Activated CD4-positive, alpha-beta T cell treated with anti-CD3 and anti-CD28 coated beads for 36 hours (primary cell): ENCODE measurements at regions of chr16 and their contacts with region 1.

Region 1: DNA sequence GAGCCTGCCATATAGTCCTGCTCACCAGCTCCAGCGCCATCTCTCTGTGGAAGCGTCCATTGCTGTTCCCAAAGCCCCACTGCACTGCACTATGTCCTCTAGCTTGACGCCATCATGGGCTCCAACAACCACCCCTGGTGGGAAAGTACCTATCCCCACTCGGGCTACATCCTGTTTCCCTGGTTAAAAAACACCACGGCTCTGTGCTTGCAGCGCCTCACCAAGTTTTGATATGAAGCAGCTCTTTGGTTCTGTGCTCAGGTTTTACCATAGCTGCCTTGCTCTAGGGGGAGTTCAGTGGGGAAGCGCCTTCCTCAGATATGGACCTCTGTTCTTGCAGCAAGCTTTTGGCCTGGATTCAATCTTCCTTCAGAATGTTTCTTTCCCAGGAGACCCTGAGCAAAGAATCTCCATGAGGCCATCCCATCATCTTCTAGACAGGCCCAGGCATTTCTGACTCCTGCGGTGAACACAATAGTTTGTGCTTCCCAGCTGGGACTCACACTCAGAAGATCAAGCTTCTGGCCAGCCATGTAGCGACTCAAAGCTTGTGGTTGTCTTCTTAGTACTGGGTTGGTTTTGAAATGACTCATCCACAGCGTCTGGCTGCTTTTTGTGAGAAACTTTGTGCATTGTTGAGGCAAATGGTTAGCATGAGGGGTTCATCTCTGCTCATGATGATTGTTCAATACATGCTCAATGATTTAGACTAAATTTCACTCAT is 39.5 kb downstream of the DYNLRB2 start:
- DNase-seq: peak; percentile 86
- ATAC-seq: peak; percentile 91
- H3K4me3 Mint-ChIP-seq: peak overlapping the region; percentile 60
- H3K27ac Mint-ChIP-seq: peak overlapping the region; percentile 99
- H3K4me1 Mint-ChIP-seq: peaks cover 50% of the 10 kb centered on the region
- H3K27me3 Mint-ChIP-seq: peaks cover 2% of the 10 kb centered on the region

Region 2: DNA sequence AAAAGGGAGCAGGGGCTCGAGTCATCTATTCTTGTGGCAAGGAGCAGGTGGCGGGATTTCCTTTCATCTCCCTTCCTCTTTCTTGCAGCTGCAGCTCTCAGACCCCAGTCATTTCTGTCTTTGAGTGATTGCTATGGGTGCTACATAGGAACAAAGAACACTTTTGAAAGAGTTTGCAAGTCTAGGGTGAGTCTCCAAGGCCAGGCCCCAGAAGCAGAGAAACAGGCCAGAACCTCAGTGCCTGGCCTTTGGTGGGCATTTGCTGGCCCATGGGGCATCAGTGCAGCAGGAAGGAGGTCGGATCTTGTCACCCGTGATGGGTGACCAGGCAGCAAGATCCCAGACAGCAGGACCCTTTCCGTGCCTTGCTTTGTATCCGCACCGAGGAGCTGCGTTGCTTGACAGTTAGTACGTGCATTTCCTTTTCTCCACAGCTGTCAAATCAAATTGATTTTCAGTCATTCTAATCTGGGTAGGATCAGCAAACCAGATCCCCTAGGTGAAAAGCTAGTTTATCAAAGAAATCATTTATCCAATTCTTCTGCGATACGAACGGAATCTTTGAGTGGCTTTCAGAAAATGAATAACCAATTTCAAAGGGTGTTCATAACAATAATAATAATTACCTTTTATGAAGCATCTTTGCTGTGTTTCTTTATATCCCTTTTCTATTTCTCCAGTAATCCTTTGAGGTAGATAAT is 735.1 kb before region 1 on chr16:
- CTCF ChIA-PET with region 1: no interaction called
- POLR2A ChIA-PET with region 1: no interaction called
- intact Hi-C with region 1: loop called in 1 of 2 experiments (anchors 10 kb)
- DNase-seq: peak; percentile 47
- ATAC-seq: peak; percentile 45
- H3K4me3 Mint-ChIP-seq: no peak overlapping the region
- H3K27ac Mint-ChIP-seq: peak overlapping the region; percentile 74
- H3K4me1 Mint-ChIP-seq: peaks cover 32% of the 10 kb centered on the region
- H3K27me3 Mint-ChIP-seq: peaks cover 10% of the 10 kb centered on the region

Region 3: GRCh38 chr16:79970551-79971236 is 609.6 kb before region 1 on chr16:
- CTCF ChIA-PET with region 1: no interaction called
- POLR2A ChIA-PET with region 1: no interaction called
- intact Hi-C with region 1: no loop called
- DNase-seq: no peak
- ATAC-seq: no peak
- H3K4me3 Mint-ChIP-seq: no peak overlapping the region
- H3K27ac Mint-ChIP-seq: no peak overlapping the region
- H3K4me1 Mint-ChIP-seq: no peaks in the 10 kb centered on the region
- H3K27me3 Mint-ChIP-seq: peaks cover 8% of the 10 kb centered on the region

Region 4: DNA sequence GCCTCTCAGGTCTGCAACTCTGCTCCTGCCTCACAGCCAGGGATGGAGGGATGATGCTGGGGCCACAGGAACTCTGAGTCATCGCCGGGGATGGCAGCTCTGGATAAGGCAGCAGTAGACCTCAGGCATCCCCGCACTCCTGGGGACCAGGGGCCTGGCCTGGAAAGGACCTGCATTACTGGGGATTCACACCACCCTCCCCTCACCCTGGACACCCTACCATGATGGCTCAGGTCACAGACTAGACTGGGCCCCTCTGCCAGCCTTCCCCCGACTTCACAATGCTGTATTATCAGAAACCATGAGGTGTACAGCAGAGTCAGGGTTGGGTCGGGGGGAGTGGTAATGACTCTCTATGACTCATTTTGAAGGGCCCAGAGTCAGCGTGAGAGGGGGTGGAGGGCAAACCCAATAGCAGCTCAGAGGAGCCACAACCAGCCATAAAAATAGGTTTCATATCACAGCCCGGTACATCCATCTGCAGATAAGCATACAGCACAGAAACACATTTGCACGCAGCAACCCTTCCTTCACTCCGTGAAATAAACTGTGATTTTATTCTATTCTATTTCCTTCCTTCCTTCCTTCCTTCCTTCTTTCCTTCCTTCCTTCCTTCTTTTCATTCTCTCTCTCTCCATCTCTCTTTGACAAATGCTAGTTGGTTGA is 10.7 kb before region 1 on chr16:
- CTCF ChIA-PET with region 1: interaction called, 3 read pairs
- POLR2A ChIA-PET with region 1: interaction called, 3 read pairs
- intact Hi-C with region 1: loop called (anchors 1 kb)
- DNase-seq: peak; percentile 90
- ATAC-seq: peak; percentile 98
- H3K4me3 Mint-ChIP-seq: peak overlapping the region; percentile 5
- H3K27ac Mint-ChIP-seq: peak overlapping the region; percentile 81
- H3K4me1 Mint-ChIP-seq: peaks cover 38% of the 10 kb centered on the region
- H3K27me3 Mint-ChIP-seq: peaks cover 4% of the 10 kb centered on the region

Region 5: DNA sequence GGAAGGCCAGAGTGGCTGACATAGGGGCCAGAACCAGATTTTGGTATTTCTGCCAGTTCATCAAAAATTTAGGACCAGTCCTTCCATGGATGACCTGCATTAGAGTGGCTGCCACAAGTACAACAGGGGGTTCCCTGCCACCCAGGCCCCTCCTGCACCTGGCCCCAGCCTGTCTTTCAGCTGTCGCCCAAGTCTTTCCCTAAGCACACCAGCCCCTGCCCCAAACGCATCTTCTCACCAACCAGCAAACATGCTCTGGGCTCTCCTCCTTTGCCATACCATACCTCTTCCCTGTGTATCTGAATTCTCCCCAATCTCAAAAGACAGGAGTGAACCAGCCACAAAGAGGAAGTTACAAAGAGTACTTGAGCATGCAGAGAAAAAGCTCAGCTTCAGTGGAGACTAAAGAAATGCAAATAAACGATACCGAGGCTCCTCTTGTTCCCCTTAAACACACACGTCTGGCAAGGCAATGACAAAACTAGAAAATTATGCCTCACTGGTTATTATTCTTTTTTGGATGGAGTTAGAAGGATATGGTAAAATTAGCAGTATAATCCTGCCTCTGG is 91.1 kb after region 1 on chr16:
- CTCF ChIA-PET with region 1: no interaction called
- POLR2A ChIA-PET with region 1: no interaction called
- intact Hi-C with region 1: loop called in 1 of 2 experiments (anchors 5 kb)
- DNase-seq: no peak
- ATAC-seq: no peak
- H3K4me3 Mint-ChIP-seq: no peak overlapping the region
- H3K27ac Mint-ChIP-seq: no peak overlapping the region
- H3K4me1 Mint-ChIP-seq: peaks cover 19% of the 10 kb centered on the region
- H3K27me3 Mint-ChIP-seq: no peaks in the 10 kb centered on the region

Region 6: DNA sequence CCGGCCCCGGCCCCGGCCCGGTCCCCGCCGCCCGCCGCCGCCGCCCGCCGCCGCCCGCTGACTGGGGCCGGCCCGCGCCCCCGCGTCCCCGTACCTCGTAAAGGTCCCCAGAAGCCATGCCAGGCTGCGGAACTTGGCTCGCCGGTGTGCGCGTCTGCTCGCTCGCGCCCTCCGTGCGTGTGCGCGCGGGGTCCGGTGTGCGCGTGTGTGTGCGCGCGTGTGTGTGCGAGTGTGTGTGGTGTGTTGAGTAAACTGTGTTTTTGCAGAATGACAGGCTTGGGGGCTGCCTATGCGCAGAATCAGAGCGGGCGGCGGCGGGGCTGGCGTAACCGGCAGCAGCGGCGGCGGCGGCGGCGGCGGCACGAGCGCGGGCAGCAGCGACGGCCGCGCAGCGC is 223.8 kb after region 1 on chr16:
- CTCF ChIA-PET with region 1: interaction called, 4 read pairs
- POLR2A ChIA-PET with region 1: interaction called, 4 read pairs
- intact Hi-C with region 1: loop called (anchors 1 to 2 kb)
- DNase-seq: peak; percentile 81
- ATAC-seq: peak; percentile 48
- H3K4me3 Mint-ChIP-seq: peak overlapping the region; percentile 84
- H3K27ac Mint-ChIP-seq: peak overlapping the region; percentile 89
- H3K4me1 Mint-ChIP-seq: peaks cover 32% of the 10 kb centered on the region
- H3K27me3 Mint-ChIP-seq: no peaks in the 10 kb centered on the region